ENCODE measurements at regions of chr18 and their contacts with region 1.

Region 1: DNA sequence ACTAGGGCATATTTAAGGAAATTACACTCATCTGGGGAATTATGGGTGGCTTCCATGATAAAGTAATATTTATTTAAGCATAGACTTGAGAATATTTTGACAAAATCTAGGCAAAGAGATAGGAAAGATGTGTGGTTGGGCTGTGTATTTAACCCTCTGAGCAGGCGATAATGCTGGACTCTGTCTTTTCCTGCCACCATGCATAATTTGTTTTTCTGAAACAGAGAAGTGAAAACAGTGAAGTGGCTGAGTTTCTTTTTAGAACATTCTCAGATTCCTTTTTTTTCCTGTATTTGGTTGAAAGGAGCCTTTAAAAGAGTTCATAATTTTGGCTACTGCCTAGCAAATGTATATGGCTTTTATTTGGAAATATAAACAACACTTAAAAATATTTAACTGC is 104.8 kb upstream of the CDH19 start:
- DNase-seq: no peak
- H3K4me3 ChIP-seq: no peak overlapping the region
- CTCF ChIP-seq: no peak
- POLR2A ChIP-seq: no peak

Region 2: DNA sequence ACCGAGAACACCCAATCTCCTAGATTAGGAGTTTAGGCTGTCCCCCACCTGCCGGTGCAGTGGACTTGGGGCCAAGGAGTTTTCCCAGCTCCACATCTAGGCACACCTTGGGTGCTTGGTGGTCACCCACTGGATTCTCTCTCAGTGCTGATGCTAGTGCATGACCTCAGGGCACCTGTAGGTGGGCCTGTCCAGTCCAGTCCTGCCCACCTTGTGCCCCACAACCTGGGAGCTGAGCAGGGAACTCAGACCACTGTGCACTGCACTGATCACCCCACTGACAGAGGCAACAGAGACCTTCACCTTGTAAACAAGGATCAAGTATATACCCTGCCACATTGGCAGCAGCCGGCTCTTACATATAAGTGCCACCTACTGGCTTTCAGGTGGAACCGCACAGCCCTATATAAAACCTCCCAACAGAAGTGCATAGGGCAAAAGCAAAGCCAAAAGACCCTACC is 92.1 kb before region 1 on chr18:
- intact Hi-C with region 1: no loop called
- DNase-seq: no peak
- H3K4me3 ChIP-seq: no peak overlapping the region
- CTCF ChIP-seq: no peak
- POLR2A ChIP-seq: no peak

Region 3: GRCh38 chr18:68323921-68324320 is 1615.3 kb after region 1 on chr18:
- intact Hi-C with region 1: loop called (anchors 5 kb)
- DNase-seq: no peak
- H3K4me3 ChIP-seq: no peak overlapping the region
- CTCF ChIP-seq: no peak
- POLR2A ChIP-seq: no peak